ENCODE measurements at regions of chr11 and their contacts with region 1.

Region 1: GRCh38 chr11:77047007-77047927 is 13.1 kb downstream of the B3GNT6 start:
- DNase-seq: no peak
- ATAC-seq: peak; percentile 91
- H3K4me3 Mint-ChIP-seq: peak overlapping the region; percentile 71
- H3K27ac Mint-ChIP-seq: peak overlapping the region; percentile 64
- H3K4me1 Mint-ChIP-seq: peaks cover 12% of the 10 kb centered on the region
- H3K27me3 Mint-ChIP-seq: peaks cover 22% of the 10 kb centered on the region
- CTCF ChIP-seq: no peak

Region 2: DNA sequence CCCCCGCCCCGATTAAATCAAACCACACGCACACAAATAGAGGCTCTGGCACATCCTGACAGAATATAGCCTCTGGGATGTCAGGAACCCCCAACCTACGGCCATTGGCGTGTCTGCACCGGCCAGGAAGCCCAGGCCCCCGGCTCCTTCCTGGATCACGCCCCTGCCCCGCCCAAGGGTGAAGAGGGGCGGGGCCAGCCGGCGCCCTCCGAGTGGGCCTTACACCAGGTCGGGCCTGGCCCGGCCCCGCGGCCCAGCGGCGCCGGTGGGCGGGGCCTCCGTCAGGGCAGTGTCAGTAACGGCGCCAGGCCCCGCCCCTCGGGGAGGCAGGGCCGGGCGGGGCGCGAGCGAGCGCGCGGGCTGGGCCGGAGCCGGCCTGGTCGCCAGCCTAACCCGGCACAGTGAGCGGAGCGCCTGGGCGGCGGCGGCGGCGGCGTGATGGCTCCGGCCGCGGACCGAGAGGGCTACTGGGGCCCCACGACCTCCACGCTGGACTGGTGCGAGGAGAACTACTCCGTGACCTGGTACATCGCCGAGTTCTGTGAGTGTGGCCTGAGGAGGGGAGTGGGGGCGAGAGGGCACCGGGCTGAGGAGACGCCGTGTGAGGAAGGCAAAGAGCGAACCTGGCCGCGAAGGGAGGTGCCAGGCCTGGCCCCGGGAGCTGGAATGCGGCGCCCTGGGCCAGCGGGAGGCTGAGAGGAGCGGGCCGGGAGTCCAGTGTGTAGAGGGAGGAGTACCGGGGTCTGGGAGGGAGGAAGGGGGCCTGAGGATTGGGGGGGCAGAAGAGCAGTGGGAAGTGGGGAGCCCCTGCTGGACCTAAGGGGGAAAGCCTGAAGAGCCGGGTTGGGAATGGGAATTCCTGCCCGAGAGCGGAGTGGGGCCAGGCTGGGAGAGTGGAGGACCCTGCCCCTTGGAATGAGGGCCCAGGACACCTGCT is 186.5 kb before region 1 on chr11 and contains the start of gene ACER3:
- CTCF ChIA-PET with region 1: no interaction called
- POLR2A ChIA-PET with region 1: no interaction called
- intact Hi-C with region 1: loop called (anchors 5 kb)
- DNase-seq: peak; percentile 89
- ATAC-seq: peak; percentile 99
- H3K4me3 Mint-ChIP-seq: peak within 1 kb of the TSS; percentile 89
- H3K27ac Mint-ChIP-seq: peak within 1 kb of the TSS; percentile 84
- H3K4me1 Mint-ChIP-seq: peaks cover 45% of the 10 kb centered on the region
- H3K27me3 Mint-ChIP-seq: no peaks in the 10 kb centered on the region
- CTCF ChIP-seq: no peak
- total RNA-seq, gene ACER3: 11.8 and 12.4 TPM in 2 replicates

Region 3: GRCh38 chr11:77009533-77010160 is 37.6 kb before region 1 on chr11:
- CTCF ChIA-PET with region 1: no interaction called
- POLR2A ChIA-PET with region 1: no interaction called
- intact Hi-C with region 1: no loop called
- DNase-seq: no peak
- ATAC-seq: no peak
- H3K4me3 Mint-ChIP-seq: no peak overlapping the region
- H3K27ac Mint-ChIP-seq: no peak overlapping the region
- H3K4me1 Mint-ChIP-seq: no peaks in the 10 kb centered on the region
- H3K27me3 Mint-ChIP-seq: no peaks in the 10 kb centered on the region
- CTCF ChIP-seq: no peak

Region 4: DNA sequence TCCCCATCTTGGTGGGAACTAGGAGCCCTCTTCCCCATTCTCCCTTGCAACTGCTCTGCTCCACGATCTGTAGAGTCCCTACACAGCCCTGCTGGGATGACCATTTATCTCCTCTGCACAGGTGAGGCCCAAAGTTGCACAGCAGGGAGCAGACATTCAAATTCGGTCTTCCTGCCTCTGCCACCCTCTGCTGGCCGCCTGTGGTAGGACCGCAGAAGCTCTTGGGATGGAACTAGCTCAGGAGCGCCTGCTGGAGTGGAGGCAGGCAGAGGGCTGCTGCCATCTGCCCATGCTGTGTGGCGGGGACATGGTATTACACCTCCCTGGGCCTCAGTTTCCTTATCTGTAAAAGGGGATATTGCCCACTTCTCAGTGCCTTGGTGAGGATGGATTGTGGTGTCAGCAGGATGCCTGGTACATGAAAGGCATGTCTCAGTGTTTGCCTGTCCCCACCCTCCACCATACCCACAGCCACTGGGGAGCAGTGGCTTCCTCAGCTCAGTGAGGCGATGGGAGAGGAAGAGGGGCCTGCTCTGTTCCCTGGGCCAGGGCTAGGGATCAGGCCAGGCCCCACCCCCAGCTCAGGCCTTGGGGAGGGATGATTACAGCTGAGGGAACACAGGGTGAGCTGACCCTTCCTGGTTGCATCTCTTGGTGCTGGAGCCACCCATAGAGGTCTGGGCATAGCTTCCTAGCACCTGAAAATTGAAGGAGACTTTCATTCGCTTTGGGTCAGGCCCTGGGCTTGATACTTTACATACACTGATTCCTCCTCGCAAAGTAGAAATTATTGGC is 44.1 kb after region 1 on chr11:
- CTCF ChIA-PET with region 1: interaction called, 30 read pairs
- POLR2A ChIA-PET with region 1: no interaction called
- intact Hi-C with region 1: loop called (anchors 1 kb)
- DNase-seq: peak; percentile 61
- ATAC-seq: peak; percentile 98
- H3K4me3 Mint-ChIP-seq: no peak overlapping the region
- H3K27ac Mint-ChIP-seq: no peak overlapping the region
- H3K4me1 Mint-ChIP-seq: no peaks in the 10 kb centered on the region
- H3K27me3 Mint-ChIP-seq: no peaks in the 10 kb centered on the region
- CTCF ChIP-seq: peak; percentile 39

Region 5: GRCh38 chr11:77547863-77548551 is 500.7 kb after region 1 on chr11:
- CTCF ChIA-PET with region 1: no interaction called
- POLR2A ChIA-PET with region 1: no interaction called
- intact Hi-C with region 1: loop called (anchors 1 kb)
- DNase-seq: no peak
- ATAC-seq: peak; percentile 42
- H3K4me3 Mint-ChIP-seq: no peak overlapping the region
- H3K27ac Mint-ChIP-seq: no peak overlapping the region
- H3K4me1 Mint-ChIP-seq: peaks cover 2% of the 10 kb centered on the region
- H3K27me3 Mint-ChIP-seq: no peaks in the 10 kb centered on the region
- CTCF ChIP-seq: peak; percentile 70

Region 6: GRCh38 chr11:77637345-77638165 is 590.3 kb after region 1 on chr11 and contains the start of gene CLNS1A:
- CTCF ChIA-PET with region 1: no interaction called
- POLR2A ChIA-PET with region 1: no interaction called
- intact Hi-C with region 1: loop called (anchors 5 kb)
- DNase-seq: peak; percentile 70
- ATAC-seq: peak; percentile 99
- H3K4me3 Mint-ChIP-seq: peak within 1 kb of the TSS; percentile 96
- H3K27ac Mint-ChIP-seq: peak within 1 kb of the TSS; percentile 94
- H3K4me1 Mint-ChIP-seq: peaks cover 41% of the 10 kb centered on the region
- H3K27me3 Mint-ChIP-seq: no peaks in the 10 kb centered on the region
- CTCF ChIP-seq: no peak
- total RNA-seq, gene CLNS1A: 112 and 116 TPM in 2 replicates

Measured in activated B cell treated with CpG ODN at 0.5 μM for 24 hours (primary cell).